Left colon (tissue), 2 donors: ENCODE measurements at regions of chr4 and their contacts with region 1.

Region 1: GRCh38 chr4:164252286-164252685 is 501.6 kb upstream of the SMIM31 start:
- DNase-seq: no peak
- ATAC-seq: no peak

Region 2: DNA sequence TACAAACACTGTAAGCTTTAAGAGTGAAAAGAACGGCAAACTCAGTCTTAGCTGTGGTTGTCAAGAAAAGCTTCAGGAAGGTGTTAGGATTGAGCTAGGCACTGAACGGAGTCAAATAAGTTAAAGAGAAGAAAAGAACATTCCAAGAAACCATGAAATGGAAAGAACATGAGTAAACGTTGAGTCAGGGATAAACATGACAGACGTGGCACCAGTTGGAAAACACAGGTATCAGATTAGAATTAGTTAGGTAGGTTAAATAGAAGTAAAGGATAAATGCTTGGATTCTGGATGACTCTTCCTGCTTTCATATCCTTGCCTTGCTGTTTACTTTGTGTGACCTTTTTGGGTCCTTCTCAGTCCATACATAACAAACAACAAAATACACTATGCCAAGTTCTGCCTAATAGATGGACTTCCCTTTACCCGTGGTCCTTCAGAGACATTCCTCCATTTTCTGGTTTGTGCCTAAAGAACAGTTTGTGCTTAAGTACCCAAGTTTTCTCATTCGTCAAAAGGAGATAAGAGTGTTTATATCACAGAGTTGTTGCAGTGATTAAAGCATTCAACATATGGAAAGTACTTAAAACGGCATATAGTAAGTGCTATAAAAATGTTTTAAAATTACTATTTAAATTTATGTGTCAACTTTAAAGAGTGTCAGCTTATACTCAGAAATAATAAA is 310.9 kb before region 1 on chr4:
- intact Hi-C with region 1: no loop called
- DNase-seq: no peak
- ATAC-seq: no peak

Region 3: DNA sequence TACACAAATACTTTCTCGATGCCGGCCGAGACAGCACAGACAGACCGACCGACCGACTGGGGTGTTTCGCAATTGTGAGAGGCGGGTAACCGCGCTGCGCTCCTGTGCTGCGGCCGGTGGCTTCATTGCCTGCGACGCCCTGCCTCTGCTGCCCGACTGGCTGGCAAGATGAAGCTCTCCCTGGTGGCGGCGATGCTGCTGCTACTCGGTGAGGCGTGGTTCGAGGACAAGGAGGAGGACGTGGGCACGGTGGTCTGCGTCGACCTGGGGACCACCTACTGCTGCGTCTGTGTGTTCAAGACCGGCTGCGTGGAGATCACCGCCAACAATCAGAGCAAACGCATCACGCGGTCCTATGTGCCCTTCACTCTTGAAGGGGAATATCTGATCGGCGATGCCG is 64.1 kb before region 1 on chr4:
- intact Hi-C with region 1: no loop called
- DNase-seq: no peak
- ATAC-seq: no peak

Region 4: DNA sequence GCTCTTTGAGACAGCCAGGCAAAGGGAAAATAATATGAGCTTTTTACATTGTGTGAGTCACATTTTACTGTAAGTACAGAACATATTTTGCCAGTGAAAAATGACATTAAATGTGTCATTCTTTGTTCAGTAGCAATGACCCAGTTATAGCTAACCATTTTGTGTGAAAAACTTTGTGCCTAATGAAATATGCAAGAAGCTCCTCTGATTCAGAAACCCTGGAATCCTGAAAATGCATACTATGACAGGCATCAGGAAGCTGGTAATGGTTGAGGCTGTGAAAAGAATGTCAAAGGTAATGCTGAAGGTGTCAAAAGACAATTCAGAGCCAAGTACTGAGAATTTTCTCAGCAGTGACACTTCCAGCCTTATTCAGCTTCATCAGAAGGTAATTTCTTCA is 47.9 kb before region 1 on chr4:
- intact Hi-C with region 1: loop called in 1 of 2 experiments (anchors 5 kb)
- DNase-seq: no peak
- ATAC-seq: no peak

Region 5: GRCh38 chr4:164488114-164488513 is 235.8 kb after region 1 on chr4:
- intact Hi-C with region 1: no loop called
- DNase-seq: no peak
- ATAC-seq: no peak

Region 6: DNA sequence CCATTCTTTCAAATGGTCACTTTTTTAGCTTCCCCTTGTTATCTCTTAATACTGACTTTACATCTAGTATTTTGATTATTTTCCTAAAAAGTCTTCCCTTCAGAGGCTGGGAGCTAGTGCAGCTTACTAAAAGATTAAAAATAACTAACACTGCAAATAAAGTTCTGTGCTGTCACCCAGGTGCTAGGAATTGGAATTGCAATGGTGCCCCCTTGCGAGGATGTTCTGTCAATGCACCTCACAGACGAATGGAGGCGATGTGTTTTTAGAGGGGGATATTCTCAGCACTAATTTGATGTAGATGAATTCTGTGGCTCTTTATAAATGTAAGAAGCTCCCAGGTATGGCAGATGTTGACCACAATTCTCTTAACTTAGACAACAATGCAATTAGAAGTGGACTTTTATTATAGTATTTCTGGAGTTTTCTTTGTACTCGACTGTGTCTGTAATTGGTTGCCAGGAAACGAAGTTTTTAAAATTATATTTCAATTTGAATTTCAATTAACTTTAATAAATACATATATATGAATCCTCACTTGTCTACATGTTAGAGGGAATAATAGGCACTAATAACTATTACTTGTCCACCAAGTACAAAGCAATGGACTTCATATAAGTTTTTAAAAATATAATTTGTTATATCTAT is 479.7 kb after region 1 on chr4:
- intact Hi-C with region 1: no loop called
- DNase-seq: peak in 1 of 2 donors; percentile 23
- ATAC-seq: peak; percentile 38